ENCODE measurements at regions of chr11 and their contacts with region 1.

Region 1: GRCh38 chr11:111422494-111423249 is 43.6 kb upstream of the POU2AF1 start:
- DNase-seq: peak; percentile 21
- H3K4me3 Mint-ChIP-seq: no peak overlapping the region
- H3K27ac Mint-ChIP-seq: peak overlapping the region; percentile 13
- H3K4me1 Mint-ChIP-seq: peaks cover 24% of the 10 kb centered on the region
- H3K27me3 Mint-ChIP-seq: no peaks in the 10 kb centered on the region

Region 2: DNA sequence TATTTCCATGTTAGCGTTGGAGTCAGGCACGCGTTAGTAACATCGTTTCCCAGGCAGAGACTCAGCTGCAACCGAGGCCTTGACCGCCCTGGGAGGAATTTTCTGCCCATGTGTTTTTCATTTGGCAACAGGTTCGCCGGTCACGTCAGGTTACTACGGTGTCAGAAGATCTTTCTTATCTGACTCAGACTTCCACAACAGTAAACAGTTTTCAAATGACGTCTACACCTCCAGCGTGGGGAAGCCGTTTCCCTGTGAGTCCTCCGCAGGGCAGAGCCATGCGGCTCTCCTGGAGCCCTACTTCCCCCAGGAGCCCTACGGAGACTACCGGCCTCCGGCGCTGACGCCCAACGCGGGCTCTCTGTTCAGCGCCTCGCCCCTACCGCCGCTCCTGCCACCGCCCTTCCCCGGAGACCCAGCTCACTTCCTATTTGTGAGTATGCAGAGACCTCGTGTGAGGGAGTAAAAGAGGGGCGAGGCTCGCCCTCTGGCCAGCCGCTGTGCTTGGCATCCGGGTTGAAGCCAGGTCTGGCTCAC is 138.7 kb before region 1 on chr11:
- intact Hi-C with region 1: loop called (anchors 1 kb)
- DNase-seq: no peak
- H3K4me3 Mint-ChIP-seq: no peak overlapping the region
- H3K27ac Mint-ChIP-seq: no peak overlapping the region
- H3K4me1 Mint-ChIP-seq: no peaks in the 10 kb centered on the region
- H3K27me3 Mint-ChIP-seq: peaks cover 4% of the 10 kb centered on the region

Region 3: GRCh38 chr11:111399187-111400031 is 23.3 kb before region 1 on chr11:
- intact Hi-C with region 1: loop called (anchors 2 kb)
- DNase-seq: no peak
- H3K4me3 Mint-ChIP-seq: no peak overlapping the region
- H3K27ac Mint-ChIP-seq: no peak overlapping the region
- H3K4me1 Mint-ChIP-seq: peaks cover 20% of the 10 kb centered on the region
- H3K27me3 Mint-ChIP-seq: no peaks in the 10 kb centered on the region

Measured in activated T-helper 1 cell treated with anti-CD3 and anti-CD28 coated beads, Interleukin-12 subunit alpha, Interleukin-12 subunit beta, Interleukin-2, Interleukin-4 antibody, amounts not matched to agents 30 ng/mL and 10 ng/mL and 1 ng/mL, durations not matched to agents 14 hours and 24 hours and 36 hours (primary cell).